ENCODE measurements at regions of chr3 and their contacts with region 1.

Region 1: DNA sequence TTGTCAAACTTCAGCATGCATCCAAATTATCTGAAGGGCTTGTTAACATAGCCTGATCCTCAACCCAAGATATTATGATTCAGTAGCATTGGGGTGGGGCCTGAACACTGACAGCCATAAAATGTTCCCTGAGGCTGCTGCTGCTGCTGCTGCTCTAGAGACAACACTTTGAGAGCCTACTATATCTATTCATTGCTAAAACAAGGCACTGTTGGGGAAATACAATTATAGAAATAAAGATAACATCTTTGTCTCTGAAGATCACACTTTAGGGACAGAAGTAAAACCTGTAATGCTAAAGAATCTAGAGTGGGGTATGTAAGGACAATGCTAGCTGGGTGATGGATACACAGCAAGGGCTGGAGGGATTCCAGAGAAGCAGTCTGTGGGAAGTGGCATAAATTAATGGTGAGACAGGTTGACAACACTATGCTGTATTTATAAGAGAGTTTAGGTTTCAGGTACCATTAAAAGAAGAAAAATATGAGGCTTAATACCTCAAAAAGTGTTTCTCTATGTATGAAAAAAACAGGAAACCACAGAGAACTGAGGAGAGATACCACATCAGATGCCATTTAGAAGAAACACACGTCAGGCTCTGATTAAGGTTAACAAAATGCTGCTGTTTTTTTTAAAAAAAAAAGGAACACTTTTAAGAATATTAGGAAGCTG is 115.9 kb downstream of the CBLB start:
- DNase-seq: peak; percentile 55
- ATAC-seq: peak; percentile 76
- H3K4me3 Mint-ChIP-seq: peak overlapping the region; percentile 42
- H3K27ac Mint-ChIP-seq: peak overlapping the region; percentile 95
- H3K4me1 Mint-ChIP-seq: peaks cover 78% of the 10 kb centered on the region
- H3K27me3 Mint-ChIP-seq: no peaks in the 10 kb centered on the region

Region 2: GRCh38 chr3:105686278-105686897 is 66.5 kb before region 1 on chr3:
- CTCF ChIA-PET with region 1: no interaction called
- POLR2A ChIA-PET with region 1: no interaction called
- intact Hi-C with region 1: loop called in 1 of 2 experiments (anchors 5 kb)
- DNase-seq: no peak
- ATAC-seq: no peak
- H3K4me3 Mint-ChIP-seq: no peak overlapping the region
- H3K27ac Mint-ChIP-seq: peak overlapping the region; percentile 42
- H3K4me1 Mint-ChIP-seq: peaks cover 24% of the 10 kb centered on the region
- H3K27me3 Mint-ChIP-seq: no peaks in the 10 kb centered on the region

Region 3: GRCh38 chr3:105774444-105775180 is 21.7 kb after region 1 on chr3:
- CTCF ChIA-PET with region 1: no interaction called
- POLR2A ChIA-PET with region 1: no interaction called
- intact Hi-C with region 1: loop called (anchors 1 to 2 kb)
- DNase-seq: no peak
- ATAC-seq: peak; percentile 72
- H3K4me3 Mint-ChIP-seq: peak overlapping the region; percentile 12
- H3K27ac Mint-ChIP-seq: peak overlapping the region; percentile 78
- H3K4me1 Mint-ChIP-seq: peaks cover 81% of the 10 kb centered on the region
- H3K27me3 Mint-ChIP-seq: no peaks in the 10 kb centered on the region

Region 4: GRCh38 chr3:105836533-105836932 is 83.7 kb after region 1 on chr3:
- CTCF ChIA-PET with region 1: no interaction called
- POLR2A ChIA-PET with region 1: no interaction called
- intact Hi-C with region 1: loop called in 1 of 2 experiments (anchors 2 kb)
- DNase-seq: peak; percentile 73
- ATAC-seq: peak; percentile 68
- H3K4me3 Mint-ChIP-seq: peak overlapping the region; percentile 15
- H3K27ac Mint-ChIP-seq: peak overlapping the region; percentile 81
- H3K4me1 Mint-ChIP-seq: peaks cover 80% of the 10 kb centered on the region
- H3K27me3 Mint-ChIP-seq: no peaks in the 10 kb centered on the region

Measured in activated CD4-positive, alpha-beta T cell treated with anti-CD3 and anti-CD28 coated beads for 36 hours (primary cell).